ENCODE measurements at regions of chrX and their contacts with region 1.

Region 1: GRCh38 chrX:44872817-44873414 is at the start of gene KDM6A:
- DNase-seq: peak; percentile 100
- total RNA-seq, gene KDM6A: 18.1 TPM

Region 2: GRCh38 chrX:44542567-44543325 is 330.2 kb before region 1 on chrX and contains the start of gene FUNDC1:
- intact Hi-C with region 1: loop called (anchors 10 kb)
- DNase-seq: peak; percentile 97
- total RNA-seq, gene FUNDC1: 28.8 TPM

Region 3: GRCh38 chrX:44961817-44962607 is 89.1 kb after region 1 on chrX:
- intact Hi-C with region 1: loop called (anchors 5 kb)
- DNase-seq: no peak

Region 4: GRCh38 chrX:45070116-45071007 is 197.4 kb after region 1 on chrX:
- intact Hi-C with region 1: loop called (anchors 5 kb)
- DNase-seq: no peak

Region 5: GRCh38 chrX:45186643-45187026 is 313.7 kb after region 1 on chrX:
- intact Hi-C with region 1: loop called (anchors 5 kb)
- DNase-seq: no peak

Region 6: GRCh38 chrX:45322382-45322781 is 449.5 kb after region 1 on chrX:
- intact Hi-C with region 1: no loop called
- DNase-seq: no peak

Measured in cardiac septum (tissue), 1 donor.